ENCODE measurements at regions of chr12 and their contacts with region 1.

Region 1: GRCh38 chr12:110600254-110600653 is 13.7 kb upstream of the TCTN1 start:
- DNase-seq: no peak
- H3K4me3 ChIP-seq: no peak overlapping the region
- H3K27ac ChIP-seq: no peak overlapping the region
- H3K4me1 ChIP-seq: no peaks in the 10 kb centered on the region
- H3K27me3 ChIP-seq: no peaks in the 10 kb centered on the region
- CTCF ChIP-seq: peak; percentile 47 to 54 (median 48)

Region 2: GRCh38 chr12:110379197-110379596 is 221.1 kb before region 1 on chr12:
- intact Hi-C with region 1: no loop called
- DNase-seq: no peak
- H3K4me3 ChIP-seq: no peak overlapping the region
- H3K27ac ChIP-seq: peak overlapping the region; percentile 83 to 85
- H3K4me1 ChIP-seq: peaks cover 0 to 18% of the 10 kb centered on the region in 2 donors
- H3K27me3 ChIP-seq: no peaks in the 10 kb centered on the region
- CTCF ChIP-seq: no peak

Region 3: DNA sequence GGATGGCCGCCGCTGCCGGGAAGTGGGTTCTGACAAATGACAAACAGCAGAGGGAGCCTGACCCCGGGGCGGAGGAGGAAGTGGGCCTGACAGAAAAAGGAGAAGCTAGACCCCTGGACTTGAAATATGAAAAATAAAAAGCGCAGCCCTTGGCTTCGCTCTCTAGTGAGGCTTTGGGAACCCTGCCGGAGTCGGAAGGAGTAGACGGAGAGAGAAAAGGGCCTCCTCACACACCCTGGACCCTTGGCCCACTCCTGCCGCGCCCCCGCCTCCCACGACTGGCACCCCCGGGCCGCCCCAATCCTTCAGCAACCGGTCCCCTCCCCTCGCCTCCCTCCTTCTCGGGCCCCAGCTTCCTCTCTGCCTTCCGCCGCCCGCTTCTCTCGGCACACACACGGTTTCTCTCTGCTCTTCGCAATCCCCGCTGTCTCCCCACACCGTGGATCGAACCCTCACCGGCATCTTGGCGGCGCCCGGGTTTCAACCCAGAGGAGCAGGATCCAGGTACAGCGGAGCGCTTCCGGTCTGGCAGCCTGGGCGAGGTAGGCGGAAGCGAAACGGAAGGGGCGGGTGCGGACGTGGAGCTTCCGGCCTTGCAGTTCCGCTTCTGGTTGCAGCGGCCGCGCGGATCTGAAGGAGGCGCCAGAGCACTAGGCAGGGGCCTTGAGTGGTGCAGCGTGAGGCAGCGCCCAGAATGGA is 150.3 kb before region 1 on chr12 and contains the start of gene ARPC3:
- intact Hi-C with region 1: loop called (anchors 1 kb)
- DNase-seq: peak; percentile 76 to 98
- H3K4me3 ChIP-seq: peak within 1 kb of the TSS; percentile 92 to 96
- H3K27ac ChIP-seq: peak within 1 kb of the TSS; percentile 92 to 98
- H3K4me1 ChIP-seq: peaks cover 4 to 17% of the 10 kb centered on the region in 2 donors
- H3K27me3 ChIP-seq: no peaks in the 10 kb centered on the region
- CTCF ChIP-seq: peak; percentile 90 to 95 (median 92)
- total RNA-seq, gene ARPC3: 76.5 TPM

Region 4: DNA sequence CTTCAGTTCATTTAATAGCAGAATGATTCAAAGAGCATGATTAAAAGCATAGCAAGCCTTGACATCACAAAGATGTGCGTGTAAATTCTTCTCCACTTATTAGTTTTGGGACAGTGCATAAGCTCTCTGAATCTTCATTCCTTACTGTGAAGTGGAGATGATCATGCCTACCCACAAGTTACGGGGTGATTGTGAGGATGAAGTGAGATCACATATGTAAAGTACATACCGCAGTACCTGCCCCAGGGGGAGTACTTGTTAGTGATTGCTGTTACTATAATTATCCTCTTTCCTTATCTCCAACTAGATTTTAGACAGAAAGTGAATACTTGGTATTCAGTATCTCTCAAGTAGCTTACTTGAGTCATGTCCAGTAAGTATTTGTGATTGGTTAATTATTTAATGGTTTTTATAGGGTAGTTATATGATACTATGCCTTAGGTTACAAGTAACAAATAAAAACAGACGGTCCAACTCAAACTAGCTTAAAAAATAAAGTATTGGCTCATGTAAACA is 92.1 kb before region 1 on chr12:
- intact Hi-C with region 1: loop called (anchors 1 kb)
- DNase-seq: no peak
- H3K4me3 ChIP-seq: no peak overlapping the region
- H3K27ac ChIP-seq: no peak overlapping the region
- H3K4me1 ChIP-seq: peaks cover 0 to 3% of the 10 kb centered on the region in 2 donors
- H3K27me3 ChIP-seq: no peaks in the 10 kb centered on the region
- CTCF ChIP-seq: no peak

Measured in ascending aorta (tissue), 2 donors.